ENCODE measurements at regions of chr2 and their contacts with region 1.

Region 1: DNA sequence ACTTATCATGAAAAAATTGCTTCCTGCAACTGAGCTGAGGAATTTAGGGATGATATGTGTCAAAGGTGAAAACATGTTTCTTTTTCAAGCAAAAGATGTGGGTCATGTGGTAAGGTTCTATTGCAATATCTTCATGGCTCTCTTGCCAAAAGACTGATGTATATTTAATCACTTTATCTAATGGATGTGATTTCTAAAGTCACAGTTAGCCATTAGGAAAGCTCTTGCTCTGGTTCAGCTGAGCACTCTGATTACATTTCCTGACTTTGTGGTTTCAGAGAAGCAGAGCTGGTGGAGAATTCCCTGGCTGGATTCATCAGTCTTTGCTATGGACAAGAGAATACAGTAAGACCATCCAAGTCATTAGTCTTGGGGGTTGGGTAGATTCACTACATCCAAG is 24.4 kb downstream of the SCN9A start:
- DNase-seq: no peak
- H3K4me3 ChIP-seq: no peak overlapping the region
- H3K4me3 Mint-ChIP-seq: no peak overlapping the region
- H3K27ac Mint-ChIP-seq: no peak overlapping the region
- H3K4me1 ChIP-seq: no peaks in the 10 kb centered on the region
- H3K4me1 Mint-ChIP-seq: no peaks in the 10 kb centered on the region
- H3K27me3 ChIP-seq: no peaks in the 10 kb centered on the region
- H3K27me3 Mint-ChIP-seq: no peaks in the 10 kb centered on the region
- CTCF ChIP-seq: no peak

Region 2: DNA sequence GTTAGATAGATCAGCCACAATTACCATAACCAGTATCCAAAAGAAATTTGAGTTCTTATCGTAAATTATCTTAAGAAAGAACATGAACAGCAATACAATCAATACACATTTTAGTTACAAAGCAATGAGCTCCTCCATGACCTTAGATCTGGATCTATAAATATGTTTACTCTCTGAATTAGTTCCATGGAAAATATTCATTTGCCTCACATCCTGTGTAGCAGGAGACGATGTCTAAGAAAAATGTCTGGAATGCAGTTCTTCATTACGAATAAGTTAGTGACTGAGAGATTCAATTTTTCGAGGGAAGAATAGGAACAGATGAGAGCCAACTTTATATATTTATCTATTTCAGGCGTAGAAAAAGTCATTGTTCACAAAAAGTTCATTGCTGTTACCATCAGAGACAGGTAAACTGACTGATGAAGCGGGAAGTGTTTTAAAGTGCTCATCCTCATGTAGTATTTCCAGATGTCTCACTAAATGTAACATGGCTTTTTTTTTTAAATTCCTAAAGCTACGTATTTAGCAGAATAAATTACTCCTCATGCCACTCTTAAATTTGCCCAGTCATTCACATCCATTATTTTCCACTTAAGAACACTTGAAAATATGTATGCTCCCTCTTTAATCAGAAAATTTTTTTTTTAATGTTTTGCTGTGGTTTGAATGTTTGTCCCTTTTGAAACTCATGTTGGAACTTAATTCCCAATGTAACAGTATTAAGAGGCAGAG is 117.0 kb before region 1 on chr2:
- CTCF ChIA-PET with region 1: no interaction called
- POLR2A ChIA-PET with region 1: no interaction called
- intact Hi-C with region 1: no loop called
- DNase-seq: no peak
- H3K4me3 ChIP-seq: no peak overlapping the region
- H3K4me3 Mint-ChIP-seq: no peak overlapping the region
- H3K27ac Mint-ChIP-seq: no peak overlapping the region
- H3K4me1 ChIP-seq: no peaks in the 10 kb centered on the region
- H3K4me1 Mint-ChIP-seq: no peaks in the 10 kb centered on the region
- H3K27me3 ChIP-seq: no peaks in the 10 kb centered on the region
- H3K27me3 Mint-ChIP-seq: no peaks in the 10 kb centered on the region
- CTCF ChIP-seq: no peak

Region 3: GRCh38 chr2:166384774-166385173 is 33.5 kb after region 1 on chr2:
- CTCF ChIA-PET with region 1: no interaction called
- POLR2A ChIA-PET with region 1: no interaction called
- intact Hi-C with region 1: loop called (anchors 5 kb)
- DNase-seq: peak in 1 of 2 experiments; percentile 11
- H3K4me3 ChIP-seq: no peak overlapping the region
- H3K4me3 Mint-ChIP-seq: no peak overlapping the region
- H3K27ac Mint-ChIP-seq: no peak overlapping the region
- H3K4me1 ChIP-seq: no peaks in the 10 kb centered on the region
- H3K4me1 Mint-ChIP-seq: no peaks in the 10 kb centered on the region
- H3K27me3 ChIP-seq: no peaks in the 10 kb centered on the region
- H3K27me3 Mint-ChIP-seq: peaks cover 8% of the 10 kb centered on the region
- CTCF ChIP-seq: peak in 1 of 2 experiments; percentile 28

Region 4: GRCh38 chr2:166439078-166439477 is 87.8 kb after region 1 on chr2:
- CTCF ChIA-PET with region 1: no interaction called
- POLR2A ChIA-PET with region 1: no interaction called
- intact Hi-C with region 1: no loop called
- DNase-seq: no peak
- H3K4me3 ChIP-seq: no peak overlapping the region
- H3K4me3 Mint-ChIP-seq: no peak overlapping the region
- H3K27ac Mint-ChIP-seq: no peak overlapping the region
- H3K4me1 ChIP-seq: no peaks in the 10 kb centered on the region
- H3K4me1 Mint-ChIP-seq: no peaks in the 10 kb centered on the region
- H3K27me3 ChIP-seq: no peaks in the 10 kb centered on the region
- H3K27me3 Mint-ChIP-seq: no peaks in the 10 kb centered on the region
- CTCF ChIP-seq: no peak

Region 5: GRCh38 chr2:166593403-166593802 is 242.1 kb after region 1 on chr2:
- CTCF ChIA-PET with region 1: no interaction called
- POLR2A ChIA-PET with region 1: no interaction called
- intact Hi-C with region 1: no loop called
- DNase-seq: no peak
- H3K4me3 ChIP-seq: no peak overlapping the region
- H3K4me3 Mint-ChIP-seq: no peak overlapping the region
- H3K27ac Mint-ChIP-seq: no peak overlapping the region
- H3K4me1 ChIP-seq: no peaks in the 10 kb centered on the region
- H3K4me1 Mint-ChIP-seq: no peaks in the 10 kb centered on the region
- H3K27me3 ChIP-seq: no peaks in the 10 kb centered on the region
- H3K27me3 Mint-ChIP-seq: no peaks in the 10 kb centered on the region
- CTCF ChIP-seq: no peak

Measured in Caco-2 (cell line).